ENCODE measurements at regions of chr22 and their contacts with region 1.

Region 1: GRCh38 chr22:43385770-43386641 is 25.8 kb upstream of the MPPED1 start:
- DNase-seq: peak; percentile 72
- H3K4me3 ChIP-seq: no peak overlapping the region
- H3K27ac ChIP-seq: no peak overlapping the region
- H3K4me1 ChIP-seq: peaks cover 0 to 3% (median 0%) of the 10 kb centered on the region in 4 donors
- H3K27me3 ChIP-seq: peaks cover 28% of the 10 kb centered on the region
- CTCF ChIP-seq: peak; percentile 74 to 91 (median 81)
- EP300 ChIP-seq: no peak
- POLR2A ChIP-seq: no peak

Region 2: GRCh38 chr22:43812149-43812842 is 426.3 kb after region 1 on chr22 and contains the start of gene EFCAB6:
- in situ Hi-C with region 1: loop called in 1 of 4 experiments (anchors 25 kb)
- intact Hi-C with region 1: no loop called
- DNase-seq: peak; percentile 95
- H3K4me3 ChIP-seq: peak within 1 kb of the TSS; percentile 60 to 96 (median 74)
- H3K27ac ChIP-seq: peak within 1 kb of the TSS; percentile 76 to 83 (median 78)
- H3K4me1 ChIP-seq: peaks cover 5 to 18% (median 10%) of the 10 kb centered on the region in 4 donors
- H3K27me3 ChIP-seq: no peaks in the 10 kb centered on the region
- CTCF ChIP-seq: no peak
- EP300 ChIP-seq: no peak
- POLR2A ChIP-seq: peak; percentile 62
- total RNA-seq, gene EFCAB6: 0.68 to 3.7 (median 0.80) TPM in 3 of 4 donors, not detected in the other

Region 3: DNA sequence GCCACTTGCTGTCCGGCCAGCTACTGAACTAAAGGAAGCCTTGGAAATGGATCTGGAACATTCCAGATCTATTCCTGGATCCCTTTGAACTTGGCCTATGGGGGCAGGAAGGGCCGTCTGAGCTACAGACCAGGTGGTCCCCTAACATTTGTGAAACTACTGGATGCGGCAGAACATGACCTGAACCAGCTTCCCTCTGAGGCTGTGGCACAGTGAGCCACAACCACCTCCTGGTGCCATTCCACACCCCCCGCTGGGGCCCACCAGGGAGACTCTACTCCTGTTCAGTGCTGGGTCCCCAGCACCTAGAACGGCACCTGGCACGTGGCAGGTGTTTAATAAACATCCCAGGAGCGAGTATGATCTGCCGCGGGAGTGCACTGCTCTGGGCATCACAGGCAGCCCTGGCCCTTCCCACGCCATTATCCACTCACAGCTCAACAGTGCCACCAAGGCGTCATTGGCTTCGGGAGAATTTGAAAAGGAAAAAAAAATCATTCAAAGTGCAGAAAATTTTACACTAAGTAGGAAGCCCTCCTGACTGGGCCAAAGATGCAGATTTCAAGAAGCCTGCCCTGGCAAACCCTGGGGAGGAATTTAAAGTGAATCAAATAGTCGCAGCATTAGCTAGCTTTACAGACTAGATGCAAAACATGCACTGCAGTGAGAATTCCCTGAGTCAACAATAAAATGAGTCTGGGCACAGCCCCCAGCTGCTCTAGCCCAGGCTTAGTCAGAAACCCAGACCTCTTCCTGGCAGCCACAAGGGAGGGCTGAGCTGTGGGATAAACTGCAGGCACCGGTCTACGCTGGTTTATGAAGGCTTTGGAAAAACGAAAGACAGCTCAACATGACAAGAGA is 440.4 kb after region 1 on chr22:
- in situ Hi-C with region 1: loop called in 1 of 4 experiments (anchors 25 kb)
- intact Hi-C with region 1: loop called (anchors 10 kb)
- DNase-seq: no peak
- H3K4me3 ChIP-seq: no peak overlapping the region
- H3K27ac ChIP-seq: peak overlapping the region in 3 of 4 donors; percentile 24 to 38 (median 32)
- H3K4me1 ChIP-seq: peaks cover 0 to 9% (median 2%) of the 10 kb centered on the region in 4 donors
- H3K27me3 ChIP-seq: peaks cover 11% of the 10 kb centered on the region
- CTCF ChIP-seq: peak in 3 of 5 experiments; percentile 14 to 26 (median 22)
- EP300 ChIP-seq: no peak
- POLR2A ChIP-seq: no peak

Measured in transverse colon (tissue), 4 donors.